ENCODE measurements at regions of chr5 and their contacts with region 1.

Region 1: GRCh38 chr5:139262742-139263445 is 30.6 kb upstream of the MATR3 start:
- DNase-seq: peak; percentile 70
- ATAC-seq: peak; percentile 98
- H3K4me3 ChIP-seq: peak overlapping the region in 2 of 3 experiments; percentile 6 to 13; a peak in 1 of 6 replicates
- H3K27ac ChIP-seq: no peak overlapping the region
- H3K4me1 ChIP-seq: peaks cover 24% of the 10 kb centered on the region
- H3K27me3 ChIP-seq: no peaks in the 10 kb centered on the region
- CTCF ChIP-seq: peak; percentile 97
- EP300 ChIP-seq: no peak
- POLR2A ChIP-seq: no peak
- RAD21 ChIP-seq: peak; percentile 96

Region 2: DNA sequence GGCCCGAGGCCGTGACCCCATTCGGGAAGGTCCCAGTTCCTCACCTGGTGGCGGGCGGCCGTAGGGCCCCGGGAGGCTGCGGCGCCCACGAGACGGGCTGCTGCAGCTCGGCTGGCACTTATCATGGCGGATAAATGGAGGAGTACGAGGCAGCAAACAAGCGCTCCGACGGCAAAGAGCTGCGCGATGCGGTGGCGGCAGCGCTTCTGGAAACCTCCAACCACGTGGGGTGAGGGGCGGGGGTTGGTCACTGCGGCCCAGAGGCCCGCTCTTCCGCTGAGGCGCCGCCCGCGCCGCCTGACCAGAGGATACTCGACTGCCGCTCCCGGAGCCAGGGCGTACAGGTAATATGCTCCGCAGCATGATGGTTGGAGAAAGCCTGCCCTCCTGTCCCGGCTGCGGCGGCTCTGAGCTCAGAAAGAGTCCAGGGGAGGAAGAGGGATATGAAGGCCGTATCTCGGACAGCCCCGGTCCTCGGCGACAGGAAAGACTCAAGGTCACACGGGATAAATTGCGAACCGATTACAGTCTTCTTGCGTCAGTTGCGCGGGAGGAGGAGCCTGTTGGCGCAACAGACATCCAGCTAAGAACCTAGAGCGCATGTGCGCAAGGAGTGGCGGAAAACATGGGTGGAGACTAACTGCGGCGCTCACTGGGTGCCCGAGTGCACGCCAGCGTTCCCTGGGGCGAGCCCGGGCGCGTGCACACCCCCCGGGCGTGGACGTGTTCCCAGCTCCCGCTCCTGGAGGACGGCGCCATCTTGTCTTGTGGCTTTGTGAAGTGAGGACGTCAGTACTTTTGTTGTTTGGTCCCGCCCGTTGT is 687.5 kb before region 1 on chr5 and contains the start of gene HSPA9:
- CTCF ChIA-PET with region 1: no interaction called
- POLR2A ChIA-PET with region 1: interaction called, 5 read pairs
- in situ Hi-C with region 1: no loop called
- intact Hi-C with region 1: loop called (anchors 1 kb)
- DNase-seq: peak; percentile 98
- ATAC-seq: peak; percentile 91
- H3K4me3 ChIP-seq: peak within 1 kb of the TSS; percentile 85 to 97 (median 87)
- H3K27ac ChIP-seq: peak within 1 kb of the TSS; percentile 98
- H3K4me1 ChIP-seq: peaks cover 55% of the 10 kb centered on the region
- H3K27me3 ChIP-seq: no peaks in the 10 kb centered on the region; a peak in 1 of 5 replicates
- CTCF ChIP-seq: no peak; the same call in 1 of the 2 replicates
- EP300 ChIP-seq: peak; percentile 52 to 73
- POLR2A ChIP-seq: peak; percentile 80 to 92
- RAD21 ChIP-seq: peak; percentile 71
- total RNA-seq, gene HSPA9: 478 and 735 TPM in 2 replicates

Region 3: GRCh38 chr5:138641547-138642298 is 621.2 kb before region 1 on chr5:
- CTCF ChIA-PET with region 1: interaction called, 12 read pairs
- POLR2A ChIA-PET with region 1: no interaction called
- in situ Hi-C with region 1: loop called (anchors 10 kb)
- intact Hi-C with region 1: loop called (anchors 1 kb)
- DNase-seq: peak; percentile 50
- ATAC-seq: peak; percentile 81
- H3K4me3 ChIP-seq: no peak overlapping the region
- H3K27ac ChIP-seq: no peak overlapping the region
- H3K4me1 ChIP-seq: peaks cover 16% of the 10 kb centered on the region; the same call in 1 of the 2 replicates
- H3K27me3 ChIP-seq: peaks cover 4 to 47% of the 10 kb centered on the region in 2 experiments
- CTCF ChIP-seq: peak; percentile 81
- EP300 ChIP-seq: no peak
- POLR2A ChIP-seq: no peak
- RAD21 ChIP-seq: peak; percentile 72

Region 4: DNA sequence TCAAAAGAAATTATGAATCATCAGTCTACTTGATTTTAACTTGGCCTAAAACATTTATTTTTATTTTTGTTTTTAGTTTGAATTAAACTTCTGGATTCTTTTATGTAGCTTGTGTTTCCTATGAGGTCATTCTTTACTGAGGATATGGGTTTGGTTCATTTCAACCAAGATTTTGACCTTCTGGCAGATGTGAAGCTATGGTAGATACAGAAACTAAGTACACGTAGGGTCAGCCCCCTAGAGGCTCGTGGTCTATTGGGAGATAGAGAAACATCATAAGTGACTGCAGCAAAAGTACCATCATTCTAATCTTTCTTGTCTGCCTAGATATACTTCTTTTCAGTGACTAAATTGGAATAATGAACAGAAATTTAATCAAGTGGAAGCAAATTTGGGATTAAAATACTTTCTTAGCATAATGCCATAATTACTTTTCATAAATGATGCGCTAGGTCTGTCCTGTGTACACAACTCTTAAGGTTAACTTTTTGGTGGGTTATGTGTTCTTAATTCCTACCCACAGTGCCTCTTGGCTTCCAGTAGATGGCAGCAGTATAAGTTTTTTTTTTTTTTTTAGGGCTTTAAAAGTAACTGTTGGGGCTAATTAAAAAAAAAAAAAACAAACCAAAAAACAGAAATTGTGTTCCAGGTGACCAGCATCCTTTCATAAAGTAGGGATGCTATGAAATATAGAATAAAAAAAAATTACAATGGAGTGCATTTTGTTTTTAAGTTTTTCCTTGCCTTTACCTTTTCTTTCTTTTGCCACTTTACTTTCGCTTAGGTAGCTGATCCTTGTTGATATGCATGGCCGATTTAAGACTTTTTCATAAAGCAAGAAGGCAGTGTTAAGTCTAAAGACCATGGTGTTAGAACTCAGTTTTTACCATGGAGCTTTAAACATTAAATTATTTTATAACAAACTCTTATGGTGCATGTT is 437.7 kb before region 1 on chr5:
- CTCF ChIA-PET with region 1: no interaction called
- POLR2A ChIA-PET with region 1: no interaction called
- in situ Hi-C with region 1: loop called (anchors 10 kb)
- intact Hi-C with region 1: no loop called
- DNase-seq: peak; percentile 7
- ATAC-seq: peak; percentile 55; the same call in 2 of the 3 replicates
- H3K4me3 ChIP-seq: no peak overlapping the region
- H3K27ac ChIP-seq: no peak overlapping the region
- H3K4me1 ChIP-seq: no peaks in the 10 kb centered on the region
- H3K27me3 ChIP-seq: no peaks in the 10 kb centered on the region
- CTCF ChIP-seq: no peak
- EP300 ChIP-seq: no peak
- POLR2A ChIP-seq: no peak
- RAD21 ChIP-seq: no peak

Region 5: DNA sequence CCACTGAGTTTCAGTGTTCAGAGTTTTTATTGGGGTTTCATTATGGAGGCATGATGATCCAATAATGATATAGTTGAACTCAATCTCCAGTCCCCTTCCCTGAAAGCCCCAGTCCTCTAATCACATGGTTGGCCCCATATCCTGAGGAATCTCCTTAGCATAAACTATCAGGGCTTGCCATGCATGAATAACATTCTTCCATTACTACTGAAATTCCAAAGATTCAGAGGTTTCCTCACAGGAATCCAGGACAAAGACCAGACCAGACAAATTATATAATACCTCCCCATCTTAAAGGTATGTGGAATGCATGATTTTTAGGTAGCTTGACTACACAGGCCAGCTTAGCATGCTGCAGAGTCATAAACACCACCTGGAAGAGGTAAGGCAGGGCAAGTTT is 372.2 kb before region 1 on chr5:
- CTCF ChIA-PET with region 1: no interaction called
- POLR2A ChIA-PET with region 1: no interaction called
- in situ Hi-C with region 1: no loop called
- intact Hi-C with region 1: no loop called
- DNase-seq: no peak
- ATAC-seq: no peak
- H3K4me3 ChIP-seq: no peak overlapping the region
- H3K27ac ChIP-seq: no peak overlapping the region
- H3K4me1 ChIP-seq: 0 out of 2 replicates have a peak, but pooled peaks cover 8% of the 10 kb centered on the region
- H3K27me3 ChIP-seq: no peaks in the 10 kb centered on the region
- CTCF ChIP-seq: no peak
- EP300 ChIP-seq: no peak
- POLR2A ChIP-seq: no peak
- RAD21 ChIP-seq: no peak

Region 6: DNA sequence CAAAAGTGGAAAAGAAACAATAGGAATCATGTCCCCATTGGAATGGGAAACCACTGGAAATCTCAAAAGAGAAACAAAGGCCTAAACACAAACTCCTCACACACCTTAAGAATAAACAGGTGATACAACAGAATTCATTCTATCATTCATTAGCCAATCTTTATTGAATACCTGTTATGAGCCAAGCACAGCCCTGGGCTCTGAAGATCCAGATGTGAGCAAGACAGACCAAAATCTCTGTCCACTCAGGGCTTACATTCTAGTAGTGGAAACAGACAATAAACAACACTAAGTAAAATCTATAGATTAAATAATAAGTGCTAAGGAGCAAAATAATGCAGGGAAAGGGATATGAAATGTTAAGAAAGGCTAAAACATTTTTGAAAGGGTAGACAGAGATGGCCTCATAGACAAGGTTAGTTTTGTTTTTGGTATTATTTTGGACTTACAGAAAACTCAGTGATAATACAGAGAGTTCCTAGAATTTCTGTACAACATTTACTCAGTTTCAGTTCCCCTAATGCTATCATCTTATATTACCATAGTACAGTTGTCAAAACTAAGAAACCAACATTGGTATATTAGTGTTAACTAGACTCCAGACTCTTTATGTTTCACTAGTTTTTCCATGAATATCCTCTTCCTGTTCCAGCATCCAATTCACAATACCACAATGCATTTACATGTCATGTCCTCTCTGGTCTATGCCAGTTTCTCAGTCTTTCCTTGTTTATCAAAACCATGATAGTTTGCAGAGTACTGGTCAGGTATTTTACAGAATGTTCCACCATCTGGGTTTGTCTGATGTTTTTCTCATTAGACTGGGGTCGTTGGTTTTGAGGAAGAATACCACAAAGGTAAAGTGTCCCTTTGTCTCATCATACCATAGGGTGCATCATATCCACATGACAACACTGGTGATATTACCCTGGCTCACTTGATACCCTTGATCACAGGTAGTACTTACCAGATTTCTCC is 168.5 kb before region 1 on chr5:
- CTCF ChIA-PET with region 1: no interaction called
- POLR2A ChIA-PET with region 1: no interaction called
- in situ Hi-C with region 1: no loop called
- intact Hi-C with region 1: no loop called
- DNase-seq: no peak
- ATAC-seq: no peak
- H3K4me3 ChIP-seq: no peak overlapping the region
- H3K27ac ChIP-seq: no peak overlapping the region
- H3K4me1 ChIP-seq: no peaks in the 10 kb centered on the region
- H3K27me3 ChIP-seq: no peaks in the 10 kb centered on the region
- CTCF ChIP-seq: no peak
- EP300 ChIP-seq: no peak
- POLR2A ChIP-seq: no peak
- RAD21 ChIP-seq: no peak

Region 7: GRCh38 chr5:139104577-139105276 is 158.2 kb before region 1 on chr5:
- CTCF ChIA-PET with region 1: no interaction called
- POLR2A ChIA-PET with region 1: no interaction called
- in situ Hi-C with region 1: no loop called
- intact Hi-C with region 1: no loop called
- DNase-seq: no peak
- ATAC-seq: no peak
- H3K4me3 ChIP-seq: no peak overlapping the region
- H3K27ac ChIP-seq: no peak overlapping the region
- H3K4me1 ChIP-seq: no peaks in the 10 kb centered on the region
- H3K27me3 ChIP-seq: no peaks in the 10 kb centered on the region
- CTCF ChIP-seq: no peak
- EP300 ChIP-seq: no peak
- POLR2A ChIP-seq: no peak
- RAD21 ChIP-seq: no peak

Region 8: GRCh38 chr5:139147483-139148087 is 115.3 kb before region 1 on chr5:
- CTCF ChIA-PET with region 1: no interaction called
- POLR2A ChIA-PET with region 1: no interaction called
- in situ Hi-C with region 1: no loop called
- intact Hi-C with region 1: loop called (anchors 10 kb)
- DNase-seq: no peak
- ATAC-seq: no peak
- H3K4me3 ChIP-seq: no peak overlapping the region
- H3K27ac ChIP-seq: no peak overlapping the region
- H3K4me1 ChIP-seq: peaks cover 14% of the 10 kb centered on the region
- H3K27me3 ChIP-seq: no peaks in the 10 kb centered on the region
- CTCF ChIP-seq: no peak
- EP300 ChIP-seq: no peak
- POLR2A ChIP-seq: no peak
- RAD21 ChIP-seq: no peak